ENCODE measurements at regions of chr5 and their contacts with region 1.

Region 1: DNA sequence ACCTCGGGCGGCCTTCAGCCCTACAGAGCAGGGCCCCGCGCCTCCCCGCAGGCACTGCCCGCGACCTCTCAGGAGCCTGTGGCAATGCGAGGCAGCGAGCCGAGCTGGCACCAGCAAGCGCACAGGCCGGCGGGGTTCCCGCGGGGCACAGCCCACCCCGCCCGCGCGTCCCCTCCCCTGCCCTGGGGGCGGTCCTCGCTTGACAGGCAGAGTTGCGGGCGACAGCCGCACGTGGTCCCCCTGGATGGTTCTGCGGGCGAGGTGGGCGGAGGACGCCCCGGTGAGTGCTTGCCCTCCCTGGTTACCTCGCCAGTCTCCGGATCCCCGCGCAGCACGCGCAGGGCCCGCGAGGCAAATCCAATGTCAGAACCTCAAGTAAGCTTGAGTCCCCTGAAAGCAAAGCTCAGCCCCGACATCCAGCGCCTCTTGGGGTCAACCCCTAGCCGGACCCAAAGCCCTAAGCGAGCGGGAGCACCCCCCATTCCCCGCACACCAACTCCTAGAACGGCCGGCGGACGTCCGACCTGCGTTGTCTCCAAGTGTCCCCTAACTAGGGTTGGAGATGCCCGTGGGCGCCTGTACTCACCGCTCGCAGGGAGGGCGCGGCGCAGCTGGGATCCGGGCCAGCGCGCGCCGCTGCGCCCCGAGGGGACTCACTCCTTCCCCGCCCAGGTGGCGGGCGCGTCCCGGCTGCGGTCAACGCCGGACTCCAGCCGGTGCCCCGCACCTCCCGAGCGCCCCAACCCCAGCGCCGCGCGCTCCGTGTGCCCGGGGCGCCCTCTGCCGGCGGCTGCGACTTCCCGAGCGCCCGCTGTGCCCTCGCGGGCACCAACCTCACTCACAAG is at the start of gene DRD1:
- DNase-seq: peak; percentile 43
- H3K4me3 ChIP-seq: peak within 1 kb of the TSS; percentile 33
- H3K27ac ChIP-seq: no peak within 1 kb of the TSS
- H3K4me1 ChIP-seq: no peaks in the 10 kb centered on the region
- H3K27me3 ChIP-seq: peaks cover 63% of the 10 kb centered on the region
- CTCF ChIP-seq: peak; percentile 63
- total RNA-seq, gene DRD1: 0.77 and 0.85 TPM in 2 replicates

Region 2: GRCh38 chr5:173984218-173984617 is 1460.1 kb before region 1 on chr5:
- CTCF ChIA-PET with region 1: no interaction called
- POLR2A ChIA-PET with region 1: no interaction called
- intact Hi-C with region 1: no loop called
- DNase-seq: no peak
- H3K4me3 ChIP-seq: no peak overlapping the region
- H3K27ac ChIP-seq: no peak overlapping the region
- H3K4me1 ChIP-seq: no peaks in the 10 kb centered on the region
- H3K27me3 ChIP-seq: peaks cover 7% of the 10 kb centered on the region
- CTCF ChIP-seq: peak; percentile 26; the same call in 1 of the 2 replicates

Region 3: GRCh38 chr5:174951146-174951780 is 493.0 kb before region 1 on chr5:
- CTCF ChIA-PET with region 1: interaction called, 3 read pairs
- POLR2A ChIA-PET with region 1: no interaction called
- intact Hi-C with region 1: loop called (anchors 1 kb)
- DNase-seq: peak; percentile 79
- H3K4me3 ChIP-seq: no peak overlapping the region
- H3K27ac ChIP-seq: no peak overlapping the region
- H3K4me1 ChIP-seq: no peaks in the 10 kb centered on the region
- H3K27me3 ChIP-seq: no peaks in the 10 kb centered on the region
- CTCF ChIP-seq: peak; percentile 74

Region 4: GRCh38 chr5:175181331-175181730 is 263.0 kb before region 1 on chr5:
- CTCF ChIA-PET with region 1: no interaction called
- POLR2A ChIA-PET with region 1: no interaction called
- intact Hi-C with region 1: no loop called
- DNase-seq: no peak
- H3K4me3 ChIP-seq: no peak overlapping the region
- H3K27ac ChIP-seq: no peak overlapping the region
- H3K4me1 ChIP-seq: no peaks in the 10 kb centered on the region
- H3K27me3 ChIP-seq: peaks cover 16% of the 10 kb centered on the region
- CTCF ChIP-seq: no peak

Region 5: DNA sequence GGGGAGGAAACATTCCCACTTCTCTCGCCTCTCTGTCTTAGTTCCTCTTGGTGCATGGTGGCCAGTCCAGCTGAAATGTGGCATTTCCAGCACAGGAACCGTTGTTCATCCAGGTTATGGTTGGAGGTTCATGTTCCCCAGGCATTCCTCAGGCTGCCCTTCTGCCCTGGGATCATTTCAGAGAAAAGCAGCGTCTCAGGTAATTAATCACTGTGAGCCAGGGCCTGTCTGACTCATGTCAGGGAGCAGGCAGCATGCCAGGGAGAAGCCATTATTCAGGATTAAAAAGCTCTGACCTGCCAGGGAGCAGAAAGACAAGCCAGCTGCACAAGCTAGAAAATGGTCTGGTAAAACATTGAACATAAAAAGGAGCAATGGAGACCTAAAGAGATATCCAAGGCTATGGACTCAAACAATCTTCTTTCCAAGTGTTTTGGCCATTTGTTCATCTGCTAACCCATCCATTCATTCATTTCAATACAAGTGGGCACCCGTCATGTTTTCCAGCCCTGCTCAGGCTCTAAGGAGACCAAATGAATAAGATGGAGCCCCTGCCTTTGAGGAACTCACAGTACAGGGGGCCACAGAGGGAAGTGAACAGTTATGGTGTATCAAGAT is 241.7 kb before region 1 on chr5:
- CTCF ChIA-PET with region 1: no interaction called
- POLR2A ChIA-PET with region 1: no interaction called
- intact Hi-C with region 1: loop called (anchors 5 kb)
- DNase-seq: peak; percentile 48
- H3K4me3 ChIP-seq: no peak overlapping the region
- H3K27ac ChIP-seq: no peak overlapping the region
- H3K4me1 ChIP-seq: no peaks in the 10 kb centered on the region
- H3K27me3 ChIP-seq: peaks cover 23% of the 10 kb centered on the region
- CTCF ChIP-seq: no peak

Region 6: DNA sequence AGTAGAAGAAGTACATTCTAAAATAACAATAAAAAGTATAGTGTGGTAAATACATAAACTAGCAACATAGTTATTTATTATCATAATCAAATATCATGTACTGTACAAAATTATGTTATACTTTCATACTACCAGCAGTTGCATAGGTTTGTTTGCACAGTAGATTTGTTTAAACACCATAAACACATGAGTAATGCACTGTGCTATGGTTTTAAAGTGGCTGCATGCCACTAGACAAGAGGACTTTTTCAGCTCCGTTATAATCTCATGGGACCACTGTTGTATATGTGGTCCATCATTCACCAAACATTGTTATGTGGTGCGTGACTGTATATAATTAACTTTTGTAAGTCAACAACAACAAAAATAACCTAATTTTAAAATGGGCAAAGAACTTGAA is 137.9 kb before region 1 on chr5:
- CTCF ChIA-PET with region 1: no interaction called
- POLR2A ChIA-PET with region 1: no interaction called
- intact Hi-C with region 1: no loop called
- DNase-seq: no peak
- H3K4me3 ChIP-seq: no peak overlapping the region
- H3K27ac ChIP-seq: no peak overlapping the region
- H3K4me1 ChIP-seq: no peaks in the 10 kb centered on the region
- H3K27me3 ChIP-seq: peaks cover 6% of the 10 kb centered on the region
- CTCF ChIP-seq: no peak

Measured in A673 (cell line).